CD4-positive, alpha-beta memory T cell (primary cell): ENCODE measurements at regions of chr4 and their contacts with region 1.

Region 1: GRCh38 chr4:75514131-75514948 is at the starts of genes RCHY1 and THAP6:
- DNase-seq: peak; percentile 92 to 96 (median 94)
- H3K4me3 ChIP-seq: peak within 1 kb of the TSS; percentile 68 to 99
- H3K4me3 Mint-ChIP-seq: no peak within 1 kb of the TSS
- H3K27ac ChIP-seq: peak within 1 kb of the TSS; percentile 97
- H3K27ac Mint-ChIP-seq: peak within 1 kb of the TSS in 3 of 7 donors; percentile 99 to 100 (median 100)
- H3K4me1 ChIP-seq: peaks cover 74% of the 10 kb centered on the region
- H3K4me1 Mint-ChIP-seq: peaks cover 35 to 51% (median 38%) of the 10 kb centered on the region in 4 donors
- H3K27me3 ChIP-seq: no peaks in the 10 kb centered on the region
- H3K27me3 Mint-ChIP-seq: no peaks in the 10 kb centered on the region
- total RNA-seq, gene RCHY1: 36.6 to 40.9 TPM
- total RNA-seq, gene THAP6: 38.1 to 43.4 TPM

Region 2: GRCh38 chr4:74157561-74158465 is 1356.5 kb before region 1 on chr4 and contains the start of gene MTHFD2L:
- CTCF ChIA-PET with region 1: no interaction called
- POLR2A ChIA-PET with region 1: no interaction called
- intact Hi-C with region 1: loop called (anchors 2 kb)
- DNase-seq: peak; percentile 72 to 81 (median 79)
- H3K4me3 ChIP-seq: peak within 1 kb of the TSS; percentile 55 to 58
- H3K4me3 Mint-ChIP-seq: peak within 1 kb of the TSS; percentile 89 to 95 (median 92)
- H3K27ac ChIP-seq: peak within 1 kb of the TSS; percentile 42
- H3K27ac Mint-ChIP-seq: peak within 1 kb of the TSS; percentile 49 to 95 (median 90)
- H3K4me1 ChIP-seq: peaks cover 17% of the 10 kb centered on the region
- H3K4me1 Mint-ChIP-seq: peaks cover 13 to 27% (median 17%) of the 10 kb centered on the region in 4 donors
- H3K27me3 ChIP-seq: no peaks in the 10 kb centered on the region
- H3K27me3 Mint-ChIP-seq: no peaks in the 10 kb centered on the region
- total RNA-seq, gene MTHFD2L: 7.5 to 7.6 TPM

Region 3: GRCh38 chr4:75327804-75328512 is 186.4 kb before region 1 on chr4:
- CTCF ChIA-PET with region 1: no interaction called
- POLR2A ChIA-PET with region 1: no interaction called
- intact Hi-C with region 1: no loop called
- DNase-seq: no peak
- H3K4me3 ChIP-seq: no peak overlapping the region
- H3K4me3 Mint-ChIP-seq: no peak overlapping the region
- H3K27ac ChIP-seq: no peak overlapping the region
- H3K27ac Mint-ChIP-seq: no peak overlapping the region
- H3K4me1 ChIP-seq: no peaks in the 10 kb centered on the region
- H3K4me1 Mint-ChIP-seq: no peaks in the 10 kb centered on the region
- H3K27me3 ChIP-seq: no peaks in the 10 kb centered on the region
- H3K27me3 Mint-ChIP-seq: peaks cover 0 to 1% of the 10 kb centered on the region in 2 donors

Region 4: GRCh38 chr4:75477201-75477600 is 37.1 kb before region 1 on chr4:
- CTCF ChIA-PET with region 1: no interaction called
- POLR2A ChIA-PET with region 1: no interaction called
- intact Hi-C with region 1: no loop called
- DNase-seq: no peak
- H3K4me3 ChIP-seq: no peak overlapping the region
- H3K4me3 Mint-ChIP-seq: no peak overlapping the region
- H3K27ac ChIP-seq: no peak overlapping the region
- H3K27ac Mint-ChIP-seq: peak overlapping the region in 2 of 7 donors; percentile 11 to 25
- H3K4me1 ChIP-seq: no peaks in the 10 kb centered on the region
- H3K4me1 Mint-ChIP-seq: peaks cover 0 to 5% (median 3%) of the 10 kb centered on the region in 4 donors
- H3K27me3 ChIP-seq: no peaks in the 10 kb centered on the region
- H3K27me3 Mint-ChIP-seq: no peaks in the 10 kb centered on the region

Region 5: DNA sequence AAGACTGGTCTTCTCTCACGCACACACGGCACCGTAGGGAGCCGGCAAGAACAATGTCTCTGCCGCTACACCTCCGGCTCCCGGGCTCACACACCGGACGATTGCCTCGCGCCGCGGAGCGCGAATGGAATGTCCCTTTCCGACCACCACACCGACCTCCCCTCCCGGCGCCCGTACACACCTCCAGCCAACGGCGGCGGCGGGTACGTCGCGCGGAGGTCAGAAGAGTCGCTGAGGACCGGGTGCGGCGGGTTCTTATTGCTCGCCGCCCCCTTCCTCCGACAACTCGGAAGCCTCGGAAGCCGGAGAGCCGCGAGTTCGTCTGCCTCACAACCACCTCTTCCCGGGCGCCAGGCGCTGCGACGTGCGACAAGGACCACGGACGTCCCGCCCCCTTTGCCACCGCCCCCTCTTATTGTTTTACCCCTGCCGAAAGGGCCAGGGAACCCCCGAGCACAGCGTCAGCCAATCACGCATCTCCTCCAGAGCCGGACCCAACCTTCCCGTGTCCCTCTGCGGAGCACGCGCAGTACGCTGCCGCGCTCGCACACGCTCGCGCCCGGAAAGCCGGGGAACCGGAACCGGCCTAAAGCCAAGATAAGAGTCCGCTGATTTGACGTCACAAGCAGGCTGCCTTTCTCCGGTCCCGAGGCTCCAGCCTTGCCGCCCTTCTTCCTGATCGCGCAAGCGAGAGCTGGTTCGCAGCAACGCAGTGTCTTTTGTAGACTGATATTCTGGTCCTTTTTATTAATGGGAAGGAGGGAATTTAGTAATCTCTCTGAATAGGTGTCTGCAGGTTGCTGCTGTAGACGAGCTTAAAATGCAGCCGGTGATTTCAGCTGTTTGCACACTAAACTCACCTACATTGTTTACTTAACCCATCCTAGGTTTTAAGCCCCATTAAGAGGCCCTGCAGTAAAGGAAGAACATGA is 159.0 kb after region 1 on chr4 and contains the start of gene G3BP2:
- CTCF ChIA-PET with region 1: no interaction called
- POLR2A ChIA-PET with region 1: interaction called, 27 read pairs
- intact Hi-C with region 1: loop called (anchors 1 kb)
- DNase-seq: peak; percentile 95 to 99 (median 98)
- H3K4me3 ChIP-seq: peak within 1 kb of the TSS; percentile 90 to 97
- H3K4me3 Mint-ChIP-seq: peak within 1 kb of the TSS; percentile 88 to 99 (median 98)
- H3K27ac ChIP-seq: peak within 1 kb of the TSS; percentile 97
- H3K27ac Mint-ChIP-seq: peak within 1 kb of the TSS; percentile 97 to 100 (median 98)
- H3K4me1 ChIP-seq: peaks cover 45% of the 10 kb centered on the region
- H3K4me1 Mint-ChIP-seq: peaks cover 32 to 61% (median 42%) of the 10 kb centered on the region in 4 donors
- H3K27me3 ChIP-seq: no peaks in the 10 kb centered on the region
- H3K27me3 Mint-ChIP-seq: no peaks in the 10 kb centered on the region
- total RNA-seq, gene G3BP2: 150 to 165 TPM

Region 6: GRCh38 chr4:75940692-75941253 is 426.4 kb after region 1 on chr4 and contains the start of gene NAAA:
- CTCF ChIA-PET with region 1: no interaction called
- POLR2A ChIA-PET with region 1: interaction called, 28 read pairs
- intact Hi-C with region 1: loop called (anchors 1 kb)
- DNase-seq: peak; percentile 73 to 84 (median 80)
- H3K4me3 ChIP-seq: peak within 1 kb of the TSS; percentile 80 to 98
- H3K4me3 Mint-ChIP-seq: peak within 1 kb of the TSS; percentile 97 to 99 (median 98)
- H3K27ac ChIP-seq: peak within 1 kb of the TSS; percentile 75
- H3K27ac Mint-ChIP-seq: peak within 1 kb of the TSS; percentile 96 to 98 (median 98)
- H3K4me1 ChIP-seq: peaks cover 19% of the 10 kb centered on the region
- H3K4me1 Mint-ChIP-seq: peaks cover 10 to 35% (median 19%) of the 10 kb centered on the region in 4 donors
- H3K27me3 ChIP-seq: no peaks in the 10 kb centered on the region
- H3K27me3 Mint-ChIP-seq: no peaks in the 10 kb centered on the region
- total RNA-seq, gene NAAA: 86.1 to 92.2 TPM

Region 7: GRCh38 chr4:76148142-76148865 is 634.0 kb after region 1 on chr4 and contains the start of gene NUP54:
- CTCF ChIA-PET with region 1: no interaction called
- POLR2A ChIA-PET with region 1: interaction called, 7 read pairs
- intact Hi-C with region 1: loop called (anchors 1 kb)
- DNase-seq: peak; percentile 92 to 94 (median 93)
- H3K4me3 ChIP-seq: peak within 1 kb of the TSS; percentile 54 to 88
- H3K4me3 Mint-ChIP-seq: peak within 1 kb of the TSS; percentile 92 to 100 (median 98)
- H3K27ac ChIP-seq: peak within 1 kb of the TSS; percentile 88
- H3K27ac Mint-ChIP-seq: peak within 1 kb of the TSS; percentile 84 to 100 (median 98)
- H3K4me1 ChIP-seq: peaks cover 34% of the 10 kb centered on the region
- H3K4me1 Mint-ChIP-seq: peaks cover 21 to 46% (median 34%) of the 10 kb centered on the region in 4 donors
- H3K27me3 ChIP-seq: no peaks in the 10 kb centered on the region
- H3K27me3 Mint-ChIP-seq: no peaks in the 10 kb centered on the region
- total RNA-seq, gene NUP54: 49.3 to 52.8 TPM

Region 8: DNA sequence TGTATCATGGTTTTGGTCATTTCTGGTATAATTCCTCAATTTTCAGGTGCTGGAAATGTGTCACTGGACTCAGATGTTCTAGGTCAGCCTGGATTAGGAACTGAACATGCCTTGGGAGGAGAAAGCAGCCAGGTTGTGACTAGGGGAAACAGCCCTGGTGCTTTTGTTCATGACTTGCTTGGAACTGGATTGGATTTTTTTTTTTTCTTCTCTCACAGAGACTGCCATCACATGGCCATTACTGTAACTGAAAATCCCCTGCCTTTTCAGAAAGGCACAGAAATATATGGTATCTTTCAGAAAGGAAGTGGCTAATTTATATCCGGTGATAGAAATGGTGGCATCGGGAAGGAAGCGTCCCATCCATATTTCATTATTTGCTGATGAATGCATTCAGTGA is 1469.8 kb after region 1 on chr4:
- CTCF ChIA-PET with region 1: no interaction called
- POLR2A ChIA-PET with region 1: no interaction called
- intact Hi-C with region 1: loop called (anchors 10 kb)
- DNase-seq: peak in 4 of 5 donors; percentile 36 to 56 (median 45)
- H3K4me3 ChIP-seq: peak overlapping the region in 1 of 2 donors; percentile 3
- H3K4me3 Mint-ChIP-seq: peak overlapping the region in 7 of 8 donors; percentile 34 to 85 (median 68)
- H3K27ac ChIP-seq: no peak overlapping the region
- H3K27ac Mint-ChIP-seq: peak overlapping the region; percentile 48 to 93 (median 80)
- H3K4me1 ChIP-seq: peaks cover 76% of the 10 kb centered on the region
- H3K4me1 Mint-ChIP-seq: peaks cover 61 to 95% (median 78%) of the 10 kb centered on the region in 4 donors
- H3K27me3 ChIP-seq: no peaks in the 10 kb centered on the region
- H3K27me3 Mint-ChIP-seq: no peaks in the 10 kb centered on the region